ENCODE measurements at regions of chr11 and their contacts with region 1.

Region 1: GRCh38 chr11:120303004-120303637 is 22.0 kb upstream of the TLCD5 start:
- DNase-seq: peak; percentile 86
- ATAC-seq: peak; percentile 90
- H3K4me3 Mint-ChIP-seq: no peak overlapping the region
- H3K27ac Mint-ChIP-seq: no peak overlapping the region
- H3K4me1 Mint-ChIP-seq: no peaks in the 10 kb centered on the region
- H3K27me3 Mint-ChIP-seq: peaks cover 10% of the 10 kb centered on the region
- CTCF ChIP-seq: peak; percentile 96

Region 2: DNA sequence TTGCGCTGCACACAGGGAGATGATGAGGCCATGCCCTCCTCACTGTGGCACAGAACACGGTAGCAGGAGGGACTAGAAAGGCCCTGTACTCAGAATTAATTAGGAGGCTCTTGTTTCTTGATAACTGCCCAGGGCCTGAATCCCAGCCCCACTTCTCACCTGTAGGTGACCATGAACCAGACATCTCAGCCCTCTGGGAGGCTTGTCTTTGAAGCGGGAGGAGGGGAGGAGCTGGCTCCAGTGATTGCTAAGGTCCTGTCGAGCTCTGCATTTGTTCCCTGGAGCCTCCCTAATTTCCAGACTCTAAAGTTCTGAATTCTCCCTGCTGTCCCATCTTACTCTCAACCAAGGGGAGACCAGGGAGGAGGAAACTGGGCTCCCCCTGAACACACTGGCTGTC is 112.1 kb before region 1 on chr11:
- CTCF ChIA-PET with region 1: interaction called, 10 read pairs
- POLR2A ChIA-PET with region 1: interaction called, 4 read pairs
- intact Hi-C with region 1: no loop called
- DNase-seq: no peak
- ATAC-seq: no peak
- H3K4me3 Mint-ChIP-seq: no peak overlapping the region
- H3K27ac Mint-ChIP-seq: no peak overlapping the region
- H3K4me1 Mint-ChIP-seq: peaks cover 7% of the 10 kb centered on the region
- H3K27me3 Mint-ChIP-seq: peaks cover 4% of the 10 kb centered on the region
- CTCF ChIP-seq: no peak

Region 3: DNA sequence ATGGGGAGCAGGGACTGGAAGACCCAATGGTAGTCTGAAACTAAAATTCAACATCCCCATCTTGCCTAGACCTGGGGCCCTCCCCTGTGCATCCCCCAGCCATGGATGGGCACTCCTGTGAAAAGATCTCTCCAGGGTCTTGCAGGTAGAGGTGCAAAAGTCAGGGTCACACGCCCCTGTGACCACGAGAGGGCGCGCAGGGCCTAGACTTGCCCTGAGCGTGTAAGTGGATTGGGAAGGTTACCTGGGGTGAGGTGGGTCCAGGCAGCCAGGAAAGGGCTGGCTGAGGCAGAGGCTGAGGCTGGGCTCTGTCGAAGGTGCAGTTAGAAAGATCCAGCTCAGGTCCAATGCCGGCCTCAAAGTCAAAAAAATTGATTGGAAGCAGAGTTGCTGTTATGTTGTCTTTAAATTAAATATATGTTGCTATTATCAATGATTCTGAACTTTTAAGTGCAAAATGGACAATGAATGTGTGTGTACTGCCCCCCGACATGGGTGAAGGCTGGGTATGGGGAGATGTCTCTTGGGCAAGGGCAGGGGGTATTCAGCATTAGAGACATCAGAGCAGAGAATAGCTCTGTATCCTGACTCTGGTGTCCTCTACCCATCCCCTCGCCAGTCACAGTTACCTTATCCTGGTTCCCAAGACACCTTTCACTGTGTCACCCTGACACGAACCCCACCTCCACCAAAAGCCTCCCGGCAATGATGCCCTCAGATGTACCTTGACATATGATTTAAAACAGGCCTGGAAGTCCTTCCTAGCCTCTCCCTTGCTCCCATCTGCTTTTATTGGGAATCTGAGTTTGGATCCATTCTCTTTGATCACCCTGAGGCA is 67.9 kb before region 1 on chr11:
- CTCF ChIA-PET with region 1: interaction called, 437 read pairs
- POLR2A ChIA-PET with region 1: interaction called, 5 read pairs
- intact Hi-C with region 1: loop called (anchors 1 kb)
- DNase-seq: peak; percentile 85
- ATAC-seq: peak; percentile 86
- H3K4me3 Mint-ChIP-seq: no peak overlapping the region
- H3K27ac Mint-ChIP-seq: no peak overlapping the region
- H3K4me1 Mint-ChIP-seq: no peaks in the 10 kb centered on the region
- H3K27me3 Mint-ChIP-seq: peaks cover 30% of the 10 kb centered on the region
- CTCF ChIP-seq: peak; percentile 83

Region 4: GRCh38 chr11:120273448-120273847 is 29.7 kb before region 1 on chr11:
- CTCF ChIA-PET with region 1: interaction called, 13 read pairs
- POLR2A ChIA-PET with region 1: no interaction called
- intact Hi-C with region 1: no loop called
- DNase-seq: no peak
- ATAC-seq: no peak
- H3K4me3 Mint-ChIP-seq: no peak overlapping the region
- H3K27ac Mint-ChIP-seq: no peak overlapping the region
- H3K4me1 Mint-ChIP-seq: no peaks in the 10 kb centered on the region
- H3K27me3 Mint-ChIP-seq: peaks cover 23% of the 10 kb centered on the region
- CTCF ChIP-seq: no peak

Region 5: GRCh38 chr11:120316842-120317688 is 13.9 kb after region 1 on chr11:
- CTCF ChIA-PET with region 1: interaction called, 27 read pairs
- POLR2A ChIA-PET with region 1: no interaction called
- intact Hi-C with region 1: no loop called
- DNase-seq: no peak
- ATAC-seq: no peak
- H3K4me3 Mint-ChIP-seq: no peak overlapping the region
- H3K27ac Mint-ChIP-seq: no peak overlapping the region
- H3K4me1 Mint-ChIP-seq: no peaks in the 10 kb centered on the region
- H3K27me3 Mint-ChIP-seq: peaks cover 25% of the 10 kb centered on the region
- CTCF ChIP-seq: no peak

Region 6: DNA sequence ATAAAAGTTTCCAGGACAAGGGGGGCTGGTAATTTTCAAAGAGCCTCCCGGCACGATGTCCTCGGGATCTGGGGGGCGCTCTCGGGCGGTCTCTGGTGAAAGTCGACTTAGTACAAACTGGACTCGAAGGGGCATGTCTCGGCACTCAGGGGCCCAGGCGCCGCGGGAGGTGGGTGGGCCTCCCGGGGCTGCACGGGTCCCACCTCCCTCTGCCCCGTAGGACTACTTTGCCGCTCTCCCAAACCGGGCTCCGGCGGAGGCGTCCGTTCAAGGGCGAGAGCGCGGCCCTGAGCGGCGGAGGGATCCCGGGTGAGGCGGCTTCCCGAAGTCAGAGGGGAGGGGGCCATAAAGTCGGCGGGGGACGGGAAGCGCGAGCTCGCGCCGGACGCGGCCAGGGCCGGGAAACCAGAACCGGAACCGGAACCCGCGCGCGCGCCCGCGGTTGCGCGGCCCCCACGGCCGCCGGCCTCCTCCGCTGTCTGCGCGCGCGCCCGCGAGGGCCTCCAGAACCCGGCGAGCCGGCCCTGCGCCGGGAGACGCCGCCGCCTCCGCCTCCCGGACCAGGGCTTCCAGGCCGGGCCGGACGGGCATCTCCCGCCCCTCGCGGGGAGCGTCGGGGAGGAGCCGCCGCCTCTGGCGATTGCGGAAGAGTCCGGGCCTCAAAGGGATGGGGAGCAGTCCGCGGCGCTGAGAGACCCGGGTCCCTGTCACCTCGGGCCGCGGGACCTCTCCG is 33.0 kb after region 1 on chr11 and contains the start of gene ARHGEF12:
- CTCF ChIA-PET with region 1: interaction called, 17 read pairs
- POLR2A ChIA-PET with region 1: no interaction called
- intact Hi-C with region 1: no loop called
- DNase-seq: peak; percentile 83
- ATAC-seq: peak; percentile 79
- H3K4me3 Mint-ChIP-seq: peak within 1 kb of the TSS; percentile 86
- H3K27ac Mint-ChIP-seq: peak within 1 kb of the TSS; percentile 25
- H3K4me1 Mint-ChIP-seq: peaks cover 35% of the 10 kb centered on the region
- H3K27me3 Mint-ChIP-seq: peaks cover 46% of the 10 kb centered on the region
- CTCF ChIP-seq: no peak
- total RNA-seq, gene ARHGEF12: 9.6 to 10.2 TPM

Region 7: DNA sequence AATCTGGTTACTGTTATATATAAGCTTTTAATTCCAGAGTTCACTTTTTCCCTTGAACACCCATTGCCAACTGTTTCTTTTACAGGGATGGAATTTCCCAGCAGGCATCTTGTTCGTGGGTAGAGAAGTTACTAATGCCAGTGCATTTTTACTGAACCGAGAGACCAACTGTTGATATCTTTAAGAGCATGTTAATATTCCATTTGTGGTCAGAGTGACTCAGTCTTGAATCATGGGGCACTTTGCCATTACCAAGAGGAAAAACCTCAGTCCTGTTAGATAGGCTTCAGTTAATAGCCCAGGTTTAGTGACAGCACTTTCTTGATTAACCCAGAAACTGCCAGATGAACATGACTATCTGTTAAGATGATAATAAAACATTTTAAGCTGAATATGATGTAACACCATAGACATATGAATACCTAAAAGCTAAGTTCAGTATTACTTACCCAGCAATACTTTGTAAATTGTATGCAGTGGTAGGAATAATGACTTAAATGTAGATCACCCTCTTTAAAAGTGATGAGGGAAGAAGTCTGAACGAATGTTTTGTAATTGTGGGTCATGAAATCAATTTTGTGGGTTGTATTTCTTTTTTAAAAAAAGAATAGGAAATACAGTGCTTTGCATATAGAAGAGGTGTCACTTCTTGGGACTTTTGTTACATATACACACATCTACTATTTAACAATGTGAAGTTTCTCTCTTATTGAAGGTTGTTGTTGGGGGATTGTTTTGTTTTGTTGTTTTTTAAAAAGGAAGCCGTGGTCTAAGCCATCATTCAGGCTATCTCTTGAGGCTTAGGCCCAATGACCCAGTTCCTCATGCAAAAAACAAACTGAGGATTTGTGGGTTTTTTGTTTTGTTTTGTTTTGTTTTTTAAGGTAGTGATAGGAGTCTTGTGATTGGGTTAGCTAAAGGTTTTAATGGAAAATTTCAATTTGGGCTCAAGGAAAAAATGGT is 129.2 kb after region 1 on chr11:
- CTCF ChIA-PET with region 1: no interaction called
- POLR2A ChIA-PET with region 1: no interaction called
- intact Hi-C with region 1: no loop called
- DNase-seq: peak; percentile 38
- ATAC-seq: peak; percentile 90
- H3K4me3 Mint-ChIP-seq: no peak overlapping the region
- H3K27ac Mint-ChIP-seq: peak overlapping the region; percentile 32
- H3K4me1 Mint-ChIP-seq: peaks cover 15% of the 10 kb centered on the region
- H3K27me3 Mint-ChIP-seq: no peaks in the 10 kb centered on the region
- CTCF ChIP-seq: no peak